Naive thymus-derived CD4-positive, alpha-beta T cell (primary cell): ENCODE measurements at regions of chr5 and their contacts with region 1.

Region 1: GRCh38 chr5:146662229-146662628 is 146.2 kb upstream of the GPR151 start:
- DNase-seq: peak in 6 of 9 donors; percentile 2 to 53 (median 39)
- ATAC-seq: no peak
- H3K4me3 ChIP-seq: no peak overlapping the region
- H3K4me3 Mint-ChIP-seq: no peak overlapping the region
- H3K27ac ChIP-seq: no peak overlapping the region
- H3K27ac Mint-ChIP-seq: no peak overlapping the region
- H3K4me1 ChIP-seq: no peaks in the 10 kb centered on the region
- H3K4me1 Mint-ChIP-seq: peaks cover 0 to 16% (median 4%) of the 10 kb centered on the region in 7 donors
- H3K27me3 ChIP-seq: no peaks in the 10 kb centered on the region
- H3K27me3 Mint-ChIP-seq: peaks cover 0 to 1% (median 0%) of the 10 kb centered on the region in 5 donors

Region 2: DNA sequence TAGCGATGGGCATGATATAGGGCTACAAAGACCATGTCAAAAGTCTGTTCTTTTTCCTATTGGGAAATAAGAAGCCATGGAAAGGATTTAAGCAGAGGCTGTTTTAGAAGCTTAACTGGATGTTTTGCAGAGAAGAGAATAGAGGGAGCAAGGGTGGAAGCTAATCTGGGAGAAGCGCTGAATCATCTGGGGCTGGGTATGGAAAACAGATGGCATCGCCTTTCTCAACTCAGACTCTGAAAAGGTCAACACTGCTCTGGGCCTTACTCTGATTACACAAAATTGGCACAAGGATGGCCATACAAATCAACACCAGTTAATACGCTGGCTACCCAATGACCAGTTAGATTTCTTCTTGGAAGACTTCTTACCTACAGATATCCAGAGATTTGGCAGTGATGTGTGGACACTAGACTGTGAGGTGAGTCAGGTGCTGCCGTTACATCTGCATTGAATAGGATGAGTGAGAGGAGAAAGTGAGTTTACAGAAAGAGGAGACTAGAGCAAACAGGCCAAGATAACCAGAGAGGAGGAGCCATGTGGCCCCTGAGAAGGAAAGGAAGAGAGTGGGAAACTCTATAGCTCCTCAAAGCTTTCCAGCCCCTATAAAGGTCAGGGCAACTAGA is 221.2 kb before region 1 on chr5:
- CTCF ChIA-PET with region 1: no interaction called
- POLR2A ChIA-PET with region 1: no interaction called
- intact Hi-C with region 1: no loop called
- DNase-seq: no peak
- ATAC-seq: no peak
- H3K4me3 ChIP-seq: no peak overlapping the region
- H3K4me3 Mint-ChIP-seq: no peak overlapping the region
- H3K27ac ChIP-seq: no peak overlapping the region
- H3K27ac Mint-ChIP-seq: no peak overlapping the region
- H3K4me1 ChIP-seq: no peaks in the 10 kb centered on the region
- H3K4me1 Mint-ChIP-seq: no peaks in the 10 kb centered on the region
- H3K27me3 ChIP-seq: no peaks in the 10 kb centered on the region
- H3K27me3 Mint-ChIP-seq: peaks cover 16 to 37% (median 28%) of the 10 kb centered on the region in 5 donors

Region 3: DNA sequence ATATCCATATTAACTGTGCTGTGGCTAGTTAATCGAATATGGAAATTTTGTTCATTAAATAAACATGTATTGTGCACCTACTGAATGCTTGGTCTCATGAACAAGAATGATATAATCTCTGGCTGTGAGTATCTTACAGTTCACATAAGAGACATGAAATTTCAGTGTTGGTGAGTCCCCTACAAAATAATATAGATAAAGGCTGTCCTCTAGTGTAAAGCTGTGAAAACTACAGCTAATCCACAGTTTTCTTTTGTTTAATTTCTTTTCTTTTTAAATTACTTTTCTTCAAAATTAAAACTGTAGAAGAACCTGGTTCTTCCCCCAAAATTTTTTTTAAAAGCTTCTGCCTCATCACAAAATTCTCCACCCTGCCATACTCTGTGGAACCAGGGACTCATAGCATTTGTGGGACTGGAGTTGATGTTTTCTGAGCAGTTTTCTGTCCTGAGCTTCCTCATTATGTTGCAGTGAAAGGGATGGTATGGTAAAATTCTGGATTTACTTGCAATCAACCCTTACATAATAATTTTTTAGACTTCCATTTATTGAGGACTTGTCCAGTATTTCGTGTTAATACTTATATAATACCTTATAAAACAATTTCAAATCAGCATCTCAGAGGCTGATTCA is 707.6 kb after region 1 on chr5:
- CTCF ChIA-PET with region 1: no interaction called
- POLR2A ChIA-PET with region 1: no interaction called
- intact Hi-C with region 1: loop called in 1 of 2 experiments (anchors 5 kb)
- DNase-seq: no peak
- ATAC-seq: no peak
- H3K4me3 ChIP-seq: no peak overlapping the region
- H3K4me3 Mint-ChIP-seq: no peak overlapping the region
- H3K27ac ChIP-seq: no peak overlapping the region
- H3K27ac Mint-ChIP-seq: no peak overlapping the region
- H3K4me1 ChIP-seq: no peaks in the 10 kb centered on the region
- H3K4me1 Mint-ChIP-seq: no peaks in the 10 kb centered on the region
- H3K27me3 ChIP-seq: no peaks in the 10 kb centered on the region
- H3K27me3 Mint-ChIP-seq: peaks cover 0 to 7% (median 0%) of the 10 kb centered on the region in 5 donors